GM23248 (cell line): ENCODE measurements at regions of chr9 and their contacts with region 1.

Region 1: GRCh38 chr9:72856972-72857623 is 95.8 kb downstream of the ALDH1A1 start:
- DNase-seq: peak; percentile 78
- H3K4me3 ChIP-seq: no peak overlapping the region
- H3K27ac ChIP-seq: no peak overlapping the region
- H3K4me1 ChIP-seq: peaks cover 10% of the 10 kb centered on the region
- H3K27me3 ChIP-seq: no peaks in the 10 kb centered on the region

Region 2: DNA sequence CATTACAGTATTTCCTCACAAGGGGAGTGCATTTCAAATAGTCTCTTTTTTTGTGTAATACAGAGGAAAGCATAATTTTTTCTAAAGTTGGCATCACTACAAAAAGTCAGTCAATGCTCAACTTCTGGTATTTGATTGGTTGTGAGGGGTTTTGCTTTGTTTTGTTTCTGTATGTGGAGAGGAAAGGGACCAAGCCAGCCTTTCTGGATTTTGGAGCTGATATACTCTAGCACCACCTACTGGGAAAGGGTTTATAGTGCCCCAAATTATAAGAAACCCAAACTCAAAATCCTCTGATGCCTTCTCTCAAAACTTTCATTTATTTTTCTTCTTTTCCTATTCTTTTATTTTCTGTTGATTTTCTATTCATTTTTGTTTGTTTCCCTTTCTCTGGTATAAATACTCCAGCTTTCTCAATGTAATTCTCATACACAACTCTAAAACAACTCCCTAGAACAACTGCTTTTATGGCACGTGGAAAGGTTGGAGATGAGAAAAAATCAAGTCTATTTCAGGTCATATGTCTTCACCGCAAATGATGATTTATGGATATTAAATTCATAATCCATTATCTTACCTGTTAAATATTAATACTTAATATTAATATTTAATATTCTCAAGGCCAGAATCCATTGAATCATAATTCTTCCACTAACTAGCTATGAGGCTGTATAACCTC is 225.0 kb after region 1 on chr9:
- in situ Hi-C with region 1: loop called (anchors 5 kb)
- DNase-seq: peak; percentile 75
- H3K4me3 ChIP-seq: no peak overlapping the region
- H3K27ac ChIP-seq: no peak overlapping the region
- H3K4me1 ChIP-seq: no peaks in the 10 kb centered on the region
- H3K27me3 ChIP-seq: no peaks in the 10 kb centered on the region

Region 3: GRCh38 chr9:73183917-73184861 is 327.1 kb after region 1 on chr9:
- in situ Hi-C with region 1: loop called (anchors 10 kb)
- DNase-seq: peak; percentile 60
- H3K4me3 ChIP-seq: no peak overlapping the region
- H3K27ac ChIP-seq: no peak overlapping the region
- H3K4me1 ChIP-seq: peaks cover 25% of the 10 kb centered on the region
- H3K27me3 ChIP-seq: no peaks in the 10 kb centered on the region; the same call in 1 of the 2 replicates